CD14-positive monocyte (primary cell): ENCODE measurements at regions of chrX and their contacts with region 1.

Region 1: GRCh38 chrX:46628460-46629371 is 55.2 kb downstream of the CHST7 start:
- DNase-seq: peak; percentile 90 to 96 (median 90)
- H3K4me3 ChIP-seq: peak overlapping the region in 1 of 3 experiments; percentile 22
- H3K4me3 Mint-ChIP-seq: peak overlapping the region in 1 of 2 donors; percentile 51
- H3K27ac ChIP-seq: peak overlapping the region; percentile 94 to 97
- H3K27ac Mint-ChIP-seq: peak overlapping the region; percentile 95 to 99 (median 98)
- H3K4me1 ChIP-seq: peaks cover 46 to 51% of the 10 kb centered on the region in 2 donors
- H3K4me1 Mint-ChIP-seq: peaks cover 54% of the 10 kb centered on the region
- H3K27me3 ChIP-seq: no peaks in the 10 kb centered on the region
- H3K27me3 Mint-ChIP-seq: peaks cover 0 to 8% (median 0%) of the 10 kb centered on the region in 3 donors
- CTCF ChIP-seq: no peak

Region 2: DNA sequence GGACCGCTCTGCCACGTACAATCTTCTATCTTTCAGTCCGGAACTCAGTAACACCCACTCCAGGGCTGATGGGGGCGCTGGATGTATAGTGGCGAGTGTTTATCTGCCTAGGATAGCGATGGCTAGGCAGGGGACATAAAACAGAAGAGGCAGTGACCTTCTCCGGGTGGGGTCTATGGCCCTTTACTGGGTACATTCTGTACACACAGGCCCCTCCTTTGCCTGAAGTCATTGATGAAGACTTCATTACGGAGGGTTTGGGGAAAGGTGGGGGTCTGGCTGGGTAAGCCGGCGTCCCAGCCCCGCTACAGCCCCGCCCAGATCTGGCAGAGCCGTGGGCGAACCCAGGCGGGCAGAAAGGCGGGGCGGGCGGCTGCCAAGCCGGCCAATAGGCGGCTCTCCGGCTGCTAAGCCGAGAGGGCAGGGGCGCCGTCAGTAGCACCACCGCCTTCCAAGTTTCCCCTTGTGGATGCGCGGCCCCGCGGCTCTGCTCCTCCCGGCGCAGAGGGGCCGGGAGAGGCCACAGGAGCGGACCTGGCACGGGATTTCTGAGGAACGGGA is 55.3 kb before region 1 on chrX and contains the start of gene CHST7:
- intact Hi-C with region 1: loop called in 1 of 2 experiments (anchors 10 kb)
- DNase-seq: peak in 2 of 3 donors; percentile 36 to 38
- H3K4me3 ChIP-seq: peak within 1 kb of the TSS; percentile 42 to 75 (median 59)
- H3K4me3 Mint-ChIP-seq: peak within 1 kb of the TSS; percentile 79 to 84
- H3K27ac ChIP-seq: peak within 1 kb of the TSS in 1 of 2 donors; percentile 33
- H3K27ac Mint-ChIP-seq: peak within 1 kb of the TSS in 6 of 7 donors; percentile 50 to 83 (median 68)
- H3K4me1 ChIP-seq: peaks cover 33 to 41% of the 10 kb centered on the region in 2 donors
- H3K4me1 Mint-ChIP-seq: peaks cover 45% of the 10 kb centered on the region
- H3K27me3 ChIP-seq: peaks cover 0 to 7% of the 10 kb centered on the region in 2 donors
- H3K27me3 Mint-ChIP-seq: peaks cover 3 to 24% (median 24%) of the 10 kb centered on the region in 3 donors
- CTCF ChIP-seq: no peak
- polyA plus RNA-seq, gene CHST7: 6.6 to 19.2 (median 8.3) TPM

Region 3: DNA sequence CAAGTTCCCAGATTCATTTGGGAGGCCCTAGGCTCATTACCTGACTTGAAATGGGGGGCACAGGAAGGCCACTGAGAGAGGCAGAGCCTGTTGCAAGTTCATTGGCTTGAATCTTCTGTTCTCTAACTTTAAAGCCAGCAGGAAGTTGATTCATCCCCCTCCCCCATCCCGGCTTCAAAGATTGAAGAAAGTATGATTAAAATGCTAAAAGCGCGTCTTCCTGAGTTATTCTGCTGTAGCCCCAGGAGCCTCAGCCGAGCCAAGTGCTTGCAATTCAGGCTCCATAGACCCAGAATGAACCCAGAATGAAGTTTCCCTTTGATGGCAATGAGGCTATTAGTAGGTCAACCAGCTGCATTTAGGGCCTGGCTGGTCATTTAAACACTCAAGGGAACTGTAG is 40.5 kb before region 1 on chrX:
- intact Hi-C with region 1: loop called in 1 of 2 experiments (anchors 5 kb)
- DNase-seq: peak in 2 of 3 donors; percentile 11 to 20
- H3K4me3 ChIP-seq: peak overlapping the region in 1 of 3 experiments; percentile 31
- H3K4me3 Mint-ChIP-seq: peak overlapping the region; percentile 50 to 59
- H3K27ac ChIP-seq: peak overlapping the region; percentile 8 to 42
- H3K27ac Mint-ChIP-seq: peak overlapping the region in 5 of 7 donors; percentile 22 to 81 (median 74)
- H3K4me1 ChIP-seq: peaks cover 17 to 18% of the 10 kb centered on the region in 2 donors
- H3K4me1 Mint-ChIP-seq: peaks cover 22% of the 10 kb centered on the region
- H3K27me3 ChIP-seq: no peaks in the 10 kb centered on the region
- H3K27me3 Mint-ChIP-seq: peaks cover 0 to 8% (median 2%) of the 10 kb centered on the region in 3 donors
- CTCF ChIP-seq: no peak

Region 4: GRCh38 chrX:46796574-46797191 is 168.0 kb after region 1 on chrX:
- intact Hi-C with region 1: loop called in 1 of 2 experiments (anchors 10 kb)
- DNase-seq: peak; percentile 60 to 75 (median 66)
- H3K4me3 ChIP-seq: no peak overlapping the region
- H3K4me3 Mint-ChIP-seq: no peak overlapping the region
- H3K27ac ChIP-seq: no peak overlapping the region
- H3K27ac Mint-ChIP-seq: no peak overlapping the region
- H3K4me1 ChIP-seq: peaks cover 19 to 26% of the 10 kb centered on the region in 2 donors
- H3K4me1 Mint-ChIP-seq: peaks cover 19% of the 10 kb centered on the region
- H3K27me3 ChIP-seq: no peaks in the 10 kb centered on the region
- H3K27me3 Mint-ChIP-seq: peaks cover 0 to 9% (median 2%) of the 10 kb centered on the region in 3 donors
- CTCF ChIP-seq: peak; percentile 74